ENCODE measurements at regions of chr18 and their contacts with region 1.

Region 1: GRCh38 chr18:26813043-26813442 is 52.5 kb downstream of the AQP4 start:
- DNase-seq: peak; percentile 28
- H3K4me3 ChIP-seq: no peak overlapping the region
- H3K27ac ChIP-seq: no peak overlapping the region
- H3K4me1 ChIP-seq: no peaks in the 10 kb centered on the region
- H3K27me3 ChIP-seq: no peaks in the 10 kb centered on the region
- CTCF ChIP-seq: peak; percentile 33

Region 2: DNA sequence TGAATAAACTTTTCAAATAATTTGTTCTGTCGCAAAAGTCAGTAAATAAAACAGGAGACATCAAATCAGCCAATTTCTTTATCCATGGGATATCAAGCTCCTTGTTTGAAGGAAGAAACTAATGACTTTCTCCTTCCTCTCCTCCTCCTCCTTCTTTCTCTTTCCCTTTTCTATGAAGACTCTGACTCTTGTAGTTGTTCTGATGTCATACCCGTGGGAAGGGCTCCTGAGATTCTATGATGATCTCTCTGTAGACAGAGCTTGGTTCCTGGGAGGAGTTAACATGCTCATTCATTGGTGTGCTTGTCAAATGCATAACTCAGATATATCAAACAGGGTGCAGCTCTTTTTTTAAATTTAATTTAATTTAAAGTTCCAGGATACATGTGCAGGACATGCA is 146.0 kb before region 1 on chr18:
- intact Hi-C with region 1: no loop called
- DNase-seq: no peak
- H3K4me3 ChIP-seq: no peak overlapping the region
- H3K27ac ChIP-seq: no peak overlapping the region
- H3K4me1 ChIP-seq: no peaks in the 10 kb centered on the region
- H3K27me3 ChIP-seq: no peaks in the 10 kb centered on the region
- CTCF ChIP-seq: no peak

Region 3: DNA sequence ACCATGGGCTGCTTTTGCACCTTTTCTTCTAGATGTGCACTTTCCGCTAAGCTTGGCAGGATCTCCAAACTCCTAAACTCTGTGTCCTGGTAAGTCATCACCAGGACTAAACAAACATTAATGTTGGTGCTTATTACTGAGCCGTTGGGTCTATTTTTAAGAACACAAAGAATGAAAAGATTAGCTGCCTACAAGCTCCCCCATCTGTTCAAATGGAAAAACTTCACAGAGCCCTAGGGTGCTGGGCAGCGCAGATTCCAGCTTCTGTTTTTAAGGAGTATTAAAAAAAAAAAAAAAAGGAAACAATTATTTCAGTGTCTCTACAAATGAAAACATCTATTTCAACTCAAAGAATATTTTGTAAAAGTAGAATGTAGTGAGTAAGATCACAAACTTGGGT is 150.2 kb after region 1 on chr18:
- intact Hi-C with region 1: loop called (anchors 2 kb)
- DNase-seq: no peak
- H3K4me3 ChIP-seq: no peak overlapping the region
- H3K27ac ChIP-seq: no peak overlapping the region
- H3K4me1 ChIP-seq: no peaks in the 10 kb centered on the region
- H3K27me3 ChIP-seq: no peaks in the 10 kb centered on the region
- CTCF ChIP-seq: no peak

Region 4: DNA sequence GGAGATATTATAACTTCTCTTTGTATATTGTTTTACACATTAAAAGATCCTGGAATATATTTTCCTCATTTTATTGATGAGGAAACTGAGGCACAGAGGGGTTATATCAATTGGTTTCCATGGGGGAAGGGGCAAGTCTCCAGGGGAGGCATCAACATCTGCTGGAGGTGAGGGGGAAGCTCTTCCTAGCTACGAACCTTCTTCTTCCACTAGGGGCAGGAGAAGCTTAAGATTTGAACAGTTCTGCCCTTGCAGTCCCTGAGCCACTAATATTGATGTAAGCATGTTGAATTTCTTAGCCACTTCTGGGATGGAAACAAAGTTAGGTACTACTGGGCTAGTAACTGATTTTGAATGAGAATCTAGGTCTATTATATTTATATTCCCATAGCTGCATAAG is 192.5 kb after region 1 on chr18:
- intact Hi-C with region 1: loop called (anchors 5 kb)
- DNase-seq: no peak
- H3K4me3 ChIP-seq: no peak overlapping the region
- H3K27ac ChIP-seq: no peak overlapping the region
- H3K4me1 ChIP-seq: no peaks in the 10 kb centered on the region
- H3K27me3 ChIP-seq: no peaks in the 10 kb centered on the region
- CTCF ChIP-seq: no peak

Region 5: GRCh38 chr18:27605107-27605834 is 792.2 kb after region 1 on chr18:
- intact Hi-C with region 1: loop called (anchors 10 kb)
- DNase-seq: peak; percentile 59
- H3K4me3 ChIP-seq: no peak overlapping the region
- H3K27ac ChIP-seq: no peak overlapping the region
- H3K4me1 ChIP-seq: no peaks in the 10 kb centered on the region
- H3K27me3 ChIP-seq: no peaks in the 10 kb centered on the region
- CTCF ChIP-seq: peak; percentile 74

Region 6: GRCh38 chr18:28163201-28163778 is 1350.2 kb after region 1 on chr18:
- intact Hi-C with region 1: no loop called
- DNase-seq: no peak
- H3K4me3 ChIP-seq: no peak overlapping the region
- H3K27ac ChIP-seq: no peak overlapping the region
- H3K4me1 ChIP-seq: no peaks in the 10 kb centered on the region
- H3K27me3 ChIP-seq: no peaks in the 10 kb centered on the region
- CTCF ChIP-seq: no peak

Measured in colonic mucosa (tissue), 4 donors.